H1 (cell line): ENCODE measurements at regions of chr2 and their contacts with region 1.

Region 1: DNA sequence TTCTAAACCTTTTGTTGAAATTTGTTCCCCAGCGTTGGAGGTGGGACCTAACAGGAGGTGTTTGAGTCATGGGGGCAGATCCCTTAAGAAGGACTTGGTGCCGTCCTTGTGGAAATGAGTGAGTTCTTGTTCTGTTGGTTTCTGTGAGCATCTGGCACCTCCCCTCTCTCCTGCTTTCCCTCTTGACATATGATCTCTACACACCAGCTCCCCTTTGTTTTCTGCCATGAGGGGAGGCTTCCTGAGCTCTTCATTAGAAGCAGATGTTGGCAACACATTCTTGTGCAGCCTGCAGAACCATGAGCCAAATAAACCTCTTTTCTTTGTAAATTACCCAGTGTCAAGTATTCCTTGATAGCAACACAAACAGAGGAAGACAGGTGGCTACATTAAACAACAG is 23.8 kb downstream of the NABP1 start:
- DNase-seq: no peak
- H3K4me3 ChIP-seq: no peak overlapping the region
- H3K27ac ChIP-seq: no peak overlapping the region
- H3K4me1 ChIP-seq: no peaks in the 10 kb centered on the region
- H3K27me3 ChIP-seq: no peaks in the 10 kb centered on the region
- CTCF ChIP-seq: no peak
- EP300 ChIP-seq: no peak
- POLR2A ChIP-seq: no peak
- RAD21 ChIP-seq: no peak

Region 2: DNA sequence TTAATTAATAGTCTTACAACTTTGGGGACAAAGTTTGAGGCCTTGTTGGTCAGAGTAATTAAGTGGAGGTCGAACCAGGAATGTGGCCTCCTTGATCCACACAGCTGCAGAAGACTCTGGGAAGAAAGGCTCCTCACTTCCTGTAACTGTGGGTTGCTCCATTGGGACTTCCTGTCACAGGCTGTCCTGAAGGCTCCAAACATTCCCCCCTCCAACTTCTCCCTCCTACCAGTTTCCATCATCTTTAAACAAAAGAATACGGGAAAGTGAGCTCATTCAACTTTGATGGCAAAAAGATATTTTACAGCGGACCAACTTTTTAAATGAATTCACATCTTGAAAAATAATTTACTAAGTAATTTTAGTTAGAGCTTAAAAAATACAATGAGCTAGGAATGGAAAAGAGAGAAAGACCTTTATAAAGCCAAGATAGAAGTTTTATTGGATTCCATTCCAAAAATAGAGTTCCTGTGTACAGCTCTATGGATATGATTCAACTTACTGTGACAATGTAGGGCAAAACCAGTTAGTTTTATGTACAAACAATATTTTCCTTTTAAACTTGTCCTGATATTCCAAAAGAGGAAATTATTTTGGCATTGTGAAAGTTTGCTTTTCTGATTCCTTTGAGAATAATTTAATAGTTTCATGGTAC is 235.8 kb before region 1 on chr2:
- CTCF ChIA-PET with region 1: no interaction called
- POLR2A ChIA-PET with region 1: no interaction called
- DNase-seq: no peak
- H3K4me3 ChIP-seq: no peak overlapping the region
- H3K27ac ChIP-seq: no peak overlapping the region
- H3K4me1 ChIP-seq: no peaks in the 10 kb centered on the region
- H3K27me3 ChIP-seq: no peaks in the 10 kb centered on the region; a peak in 1 of 7 replicates
- CTCF ChIP-seq: no peak
- EP300 ChIP-seq: no peak
- POLR2A ChIP-seq: no peak
- RAD21 ChIP-seq: no peak

Region 3: GRCh38 chr2:191666732-191667131 is 35.0 kb before region 1 on chr2:
- CTCF ChIA-PET with region 1: no interaction called
- POLR2A ChIA-PET with region 1: no interaction called
- DNase-seq: no peak
- H3K4me3 ChIP-seq: no peak overlapping the region
- H3K27ac ChIP-seq: no peak overlapping the region
- H3K4me1 ChIP-seq: no peaks in the 10 kb centered on the region
- H3K27me3 ChIP-seq: no peaks in the 10 kb centered on the region
- CTCF ChIP-seq: no peak
- EP300 ChIP-seq: no peak
- POLR2A ChIP-seq: no peak
- RAD21 ChIP-seq: no peak

Region 4: DNA sequence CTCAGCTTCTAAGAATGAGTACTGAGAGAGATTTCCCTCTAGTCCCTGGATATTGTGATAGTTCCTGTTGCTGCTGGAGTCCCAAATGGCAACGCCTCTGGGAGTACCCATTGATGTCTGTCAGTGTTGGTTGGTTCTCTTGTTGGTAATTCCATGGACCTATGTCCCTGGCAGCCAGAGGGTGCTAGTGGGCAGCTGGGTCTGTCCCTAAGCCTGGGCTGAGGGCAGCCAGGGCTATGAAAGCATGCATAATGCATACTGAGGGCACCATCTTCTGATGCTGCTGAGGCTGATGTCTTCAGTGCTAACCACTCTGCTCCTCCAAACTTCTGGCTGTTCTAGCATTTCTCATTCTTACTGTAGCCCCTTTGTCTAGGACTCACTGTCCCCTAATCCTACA is 12.1 kb after region 1 on chr2:
- CTCF ChIA-PET with region 1: interaction called, 14 read pairs
- POLR2A ChIA-PET with region 1: interaction called, 6 read pairs
- DNase-seq: no peak
- H3K4me3 ChIP-seq: no peak overlapping the region
- H3K27ac ChIP-seq: no peak overlapping the region
- H3K4me1 ChIP-seq: no peaks in the 10 kb centered on the region
- H3K27me3 ChIP-seq: no peaks in the 10 kb centered on the region
- CTCF ChIP-seq: peak; percentile 45 to 64 (median 62)
- EP300 ChIP-seq: no peak
- POLR2A ChIP-seq: no peak
- RAD21 ChIP-seq: peak; percentile 49 to 50